Tibial artery (tissue), 4 donors: ENCODE measurements at regions of chr17 and their contacts with region 1.

Region 1: GRCh38 chr17:36534840-36535668 is at the starts of genes MYO19 and PIGW:
- DNase-seq: peak; percentile 75 to 93
- H3K4me3 ChIP-seq: peak within 1 kb of the TSS; percentile 78 to 98
- H3K27ac ChIP-seq: peak within 1 kb of the TSS; percentile 90 to 98
- H3K4me1 ChIP-seq: peaks cover 0 to 18% (median 8%) of the 10 kb centered on the region in 4 donors
- H3K27me3 ChIP-seq: no peaks in the 10 kb centered on the region
- CTCF ChIP-seq: peak in 1 of 2 experiments; percentile 21

Region 2: GRCh38 chr17:36486204-36487194 is 48.6 kb before region 1 on chr17 and contains the start of gene ZNHIT3:
- intact Hi-C with region 1: loop called (anchors 10 kb)
- DNase-seq: peak; percentile 94 to 96
- H3K4me3 ChIP-seq: peak within 1 kb of the TSS; percentile 70 to 94
- H3K27ac ChIP-seq: peak within 1 kb of the TSS; percentile 79 to 95
- H3K4me1 ChIP-seq: peaks cover 0 to 47% (median 30%) of the 10 kb centered on the region in 4 donors
- H3K27me3 ChIP-seq: peaks cover 0 to 10% of the 10 kb centered on the region in 2 donors
- CTCF ChIP-seq: no peak